BJ (cell line): ENCODE measurements at regions of chr5 and their contacts with region 1.

Region 1: DNA sequence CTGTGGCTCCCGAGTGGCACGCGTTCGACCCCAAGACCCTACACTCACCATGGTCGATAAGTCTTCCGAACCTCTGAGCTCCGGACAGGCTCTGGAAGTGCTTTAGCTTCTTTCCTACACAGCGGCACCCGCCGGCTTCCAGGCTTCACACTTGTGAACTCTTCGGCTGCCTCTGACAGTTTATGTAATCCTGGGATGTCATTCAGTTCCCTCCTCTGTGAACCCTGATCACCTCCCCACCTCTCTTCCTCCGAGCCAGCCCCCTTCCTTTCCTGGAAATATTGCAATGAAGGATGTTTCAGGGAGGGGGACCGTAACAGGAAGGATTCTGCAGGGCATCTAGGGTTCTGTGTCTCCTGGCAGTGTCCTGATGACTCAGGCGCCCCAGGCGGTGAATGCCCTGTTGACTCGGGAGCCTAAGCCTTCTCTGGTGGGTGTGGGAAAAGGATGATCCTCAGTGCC is at the start of gene CD14:
- DNase-seq: no peak
- H3K4me3 ChIP-seq: peak within 1 kb of the TSS; percentile 34
- H3K27me3 ChIP-seq: no peaks in the 10 kb centered on the region
- CTCF ChIP-seq: peak; percentile 18; the same call in 1 of the 2 replicates
- polyA plus RNA-seq, gene CD14: 0.69 and 1.9 TPM in 2 replicates

Region 2: GRCh38 chr5:140564196-140565023 is 68.6 kb before region 1 on chr5 and contains the starts of genes APBB3 and SLC35A4:
- CTCF ChIA-PET with region 1: interaction called, 11 read pairs
- POLR2A ChIA-PET with region 1: no interaction called
- DNase-seq: peak; percentile 97
- H3K4me3 ChIP-seq: peak within 1 kb of the TSS; percentile 59
- H3K27me3 ChIP-seq: no peaks in the 10 kb centered on the region
- CTCF ChIP-seq: no peak
- polyA plus RNA-seq, gene APBB3: 15.2 and 24.3 TPM in 2 replicates
- polyA plus RNA-seq, gene SLC35A4: 70.2 and 101 TPM in 2 replicates

Region 3: DNA sequence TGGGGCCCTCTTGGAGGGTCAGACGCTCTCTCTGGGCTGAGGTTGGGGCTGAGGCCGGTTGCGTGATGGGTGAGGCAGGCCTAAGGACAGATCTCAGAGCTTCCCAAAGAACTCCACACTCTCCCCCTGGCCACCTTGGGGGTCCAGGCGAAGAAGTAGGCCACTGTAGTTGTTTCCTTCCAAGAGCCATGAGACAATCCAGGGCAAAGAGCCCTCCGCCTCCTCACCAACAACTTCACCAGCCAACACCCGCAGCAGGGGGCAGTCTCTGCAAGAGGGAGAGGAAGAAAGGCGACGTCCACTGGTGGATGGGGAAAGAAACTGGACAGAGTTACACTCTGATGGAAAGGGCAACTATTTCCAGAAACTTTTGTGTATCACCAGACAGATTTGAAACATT is 57.7 kb before region 1 on chr5:
- CTCF ChIA-PET with region 1: interaction called, 10 read pairs
- POLR2A ChIA-PET with region 1: no interaction called
- DNase-seq: no peak
- H3K4me3 ChIP-seq: no peak overlapping the region
- H3K27me3 ChIP-seq: peaks cover 1% of the 10 kb centered on the region; the same call in 1 of the 2 replicates
- CTCF ChIP-seq: peak; percentile 33